ENCODE measurements at regions of chr5 and their contacts with region 1.

Region 1: DNA sequence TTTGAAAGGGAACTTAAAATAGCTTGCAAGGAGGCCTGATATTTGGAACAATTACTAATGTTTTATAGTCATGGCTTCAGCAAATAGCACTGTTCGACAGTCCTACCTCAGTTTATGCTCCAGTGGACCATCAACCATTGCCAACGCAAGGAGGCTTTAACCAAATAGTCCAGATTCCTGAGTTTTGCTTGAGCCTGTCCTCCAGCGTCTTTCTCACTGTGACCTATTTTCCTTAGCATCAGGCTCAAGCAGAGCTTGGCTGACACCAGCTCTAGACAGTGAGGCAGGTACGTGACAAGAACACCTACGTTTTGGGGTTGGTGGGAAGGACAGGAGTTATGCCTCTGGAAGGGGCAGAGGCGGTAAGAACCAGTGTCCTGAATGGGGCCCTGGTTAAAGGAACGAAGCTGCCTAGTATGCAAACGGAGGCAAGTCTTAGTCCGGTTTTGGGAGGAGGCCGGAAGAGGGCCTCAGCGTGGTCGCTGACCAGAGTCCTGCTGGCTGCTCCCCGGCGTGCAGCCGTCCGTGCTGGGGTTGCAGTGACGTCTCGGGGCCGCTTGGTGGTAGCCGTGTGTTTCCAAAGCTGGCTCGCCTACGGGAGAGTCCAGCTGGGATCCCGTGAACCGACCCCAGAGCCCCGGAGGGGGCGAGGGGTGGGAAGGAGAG is 998 bp upstream of the FGF18 start:
- DNase-seq: peak; percentile 51
- H3K4me3 ChIP-seq: peak overlapping the region; percentile 5
- H3K27ac ChIP-seq: no peak overlapping the region
- H3K4me1 ChIP-seq: peaks cover 6% of the 10 kb centered on the region
- CTCF ChIP-seq: peak; percentile 83

Region 2: GRCh38 chr5:171484460-171484899 is 66.0 kb after region 1 on chr5:
- CTCF ChIA-PET with region 1: no interaction called
- POLR2A ChIA-PET with region 1: no interaction called
- intact Hi-C with region 1: loop called (anchors 1 kb)
- DNase-seq: peak; percentile 29
- H3K4me3 ChIP-seq: no peak overlapping the region
- H3K27ac ChIP-seq: no peak overlapping the region
- H3K4me1 ChIP-seq: no peaks in the 10 kb centered on the region
- CTCF ChIP-seq: peak; percentile 94

Region 3: DNA sequence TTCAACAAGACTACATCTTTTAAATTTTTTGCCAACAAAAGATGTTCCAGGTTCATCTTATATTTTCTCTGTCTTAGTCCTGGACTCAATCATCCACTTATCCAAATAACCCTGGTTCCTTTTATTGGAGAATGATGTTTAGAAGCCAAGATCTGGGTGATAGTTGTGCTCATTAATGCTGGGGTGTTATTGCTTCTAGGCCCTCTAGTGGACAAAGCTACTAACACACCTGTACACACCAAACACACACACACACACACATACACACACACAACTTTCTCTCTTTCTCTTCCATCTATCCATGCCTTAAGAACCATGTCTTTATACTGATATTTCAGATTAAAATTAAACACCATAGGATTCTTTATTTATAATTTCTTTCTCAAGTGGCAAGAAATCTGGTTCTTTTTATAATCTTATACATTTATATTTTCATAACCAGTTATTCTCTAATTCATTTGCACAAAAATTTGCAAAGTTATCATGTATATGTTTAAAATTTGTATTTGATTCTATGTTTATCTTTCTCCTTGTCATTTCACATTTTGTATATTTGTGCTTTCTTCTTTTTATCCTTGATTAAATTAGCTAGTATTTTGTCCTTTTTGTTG is 188.1 kb after region 1 on chr5:
- CTCF ChIA-PET with region 1: interaction called, 3 read pairs
- POLR2A ChIA-PET with region 1: no interaction called
- intact Hi-C with region 1: loop called (anchors 5 kb)
- DNase-seq: peak; percentile 39
- H3K4me3 ChIP-seq: no peak overlapping the region
- H3K27ac ChIP-seq: no peak overlapping the region
- H3K4me1 ChIP-seq: no peaks in the 10 kb centered on the region
- CTCF ChIP-seq: peak; percentile 84

Region 4: DNA sequence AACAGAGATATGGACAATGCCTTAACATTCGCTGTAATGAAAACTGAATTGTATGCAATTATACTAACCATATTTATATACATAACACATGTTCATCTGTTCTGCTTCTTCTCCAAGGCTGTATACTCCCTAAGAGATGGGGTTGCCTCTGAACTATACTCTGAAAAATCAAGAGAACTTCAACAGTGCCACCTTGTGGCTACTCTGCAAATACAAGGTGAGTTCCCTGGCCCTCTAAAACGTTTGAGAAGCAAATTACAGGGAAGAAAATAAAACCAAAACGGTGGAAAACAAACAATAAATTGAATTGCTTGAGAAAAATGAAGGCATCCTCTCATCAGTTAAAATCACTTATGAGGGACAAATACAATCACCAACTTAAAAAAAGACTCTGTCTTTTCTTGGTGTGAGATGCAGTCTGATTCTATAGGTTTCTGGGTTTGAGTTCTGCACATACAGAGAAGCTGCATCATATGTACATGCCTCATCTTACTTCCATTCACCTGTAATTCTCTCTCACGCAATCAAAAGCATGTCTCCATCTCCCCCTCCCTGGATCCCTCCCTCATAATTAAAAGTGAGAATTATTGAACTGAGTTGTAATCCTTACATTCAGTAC is 489.4 kb after region 1 on chr5:
- CTCF ChIA-PET with region 1: no interaction called
- POLR2A ChIA-PET with region 1: interaction called, 3 read pairs
- intact Hi-C with region 1: loop called (anchors 1 kb)
- DNase-seq: peak; percentile 68
- H3K4me3 ChIP-seq: no peak overlapping the region
- H3K27ac ChIP-seq: no peak overlapping the region
- H3K4me1 ChIP-seq: peaks cover 5% of the 10 kb centered on the region
- CTCF ChIP-seq: peak; percentile 97

Region 5: GRCh38 chr5:172044631-172045314 is 626.3 kb after region 1 on chr5:
- CTCF ChIA-PET with region 1: no interaction called
- POLR2A ChIA-PET with region 1: no interaction called
- intact Hi-C with region 1: loop called (anchors 5 kb)
- DNase-seq: no peak
- H3K4me3 ChIP-seq: no peak overlapping the region
- H3K27ac ChIP-seq: no peak overlapping the region
- H3K4me1 ChIP-seq: peaks cover 5% of the 10 kb centered on the region
- CTCF ChIP-seq: 0 out of 2 replicates have a peak, but pooled peaks have one; percentile 16